ENCODE measurements at regions of chr12 and their contacts with region 1.

Region 1: DNA sequence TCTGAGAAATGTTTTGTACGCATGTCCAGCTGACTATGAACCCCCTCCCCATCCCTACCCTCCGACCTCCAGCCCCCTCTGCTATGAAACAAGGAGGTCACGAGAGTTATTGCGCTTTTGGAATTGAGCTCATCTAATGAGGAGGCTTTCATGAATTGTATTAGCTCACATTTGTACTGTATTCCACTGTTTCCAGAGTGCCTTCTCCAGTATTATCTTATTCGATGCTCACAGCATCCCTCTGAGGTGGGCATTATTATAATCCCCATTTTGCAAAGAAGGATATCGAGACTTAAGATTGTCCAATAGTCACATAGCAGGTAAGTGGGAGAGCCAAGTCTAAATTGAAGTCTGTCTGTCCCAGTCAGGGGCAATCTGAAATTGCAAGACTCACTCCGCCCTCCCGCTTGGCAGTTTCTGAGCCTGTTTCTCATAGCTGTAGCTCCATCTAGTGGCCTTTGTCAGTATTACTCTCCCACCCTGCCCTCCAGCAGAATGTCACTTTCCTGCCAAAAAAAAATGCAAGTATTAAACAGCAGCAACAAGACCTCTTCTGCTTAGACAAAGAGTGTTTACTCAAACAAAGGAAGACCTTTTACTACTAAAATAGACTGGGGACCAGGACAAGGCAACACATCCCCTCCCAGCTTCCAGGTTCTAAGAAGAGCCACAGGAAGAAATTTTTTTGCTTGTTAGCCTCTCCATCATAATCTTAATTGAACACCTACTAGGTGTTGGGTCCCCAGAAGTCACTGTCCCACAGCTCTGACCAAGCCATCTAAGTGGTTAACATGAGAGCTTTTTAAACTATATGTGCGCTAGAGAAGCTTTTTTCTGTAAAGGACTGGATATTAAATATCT is 48.6 kb upstream of the TMEM233 start:
- DNase-seq: peak; percentile 61
- ATAC-seq: peak; percentile 95
- H3K4me3 ChIP-seq: no peak overlapping the region
- H3K27ac ChIP-seq: no peak overlapping the region
- H3K4me1 ChIP-seq: no peaks in the 10 kb centered on the region
- H3K27me3 ChIP-seq: peaks cover 44% of the 10 kb centered on the region
- CTCF ChIP-seq: peak; percentile 76 to 83 (median 79)
- POLR2A ChIP-seq: no peak
- RAD21 ChIP-seq: peak; percentile 82

Region 2: DNA sequence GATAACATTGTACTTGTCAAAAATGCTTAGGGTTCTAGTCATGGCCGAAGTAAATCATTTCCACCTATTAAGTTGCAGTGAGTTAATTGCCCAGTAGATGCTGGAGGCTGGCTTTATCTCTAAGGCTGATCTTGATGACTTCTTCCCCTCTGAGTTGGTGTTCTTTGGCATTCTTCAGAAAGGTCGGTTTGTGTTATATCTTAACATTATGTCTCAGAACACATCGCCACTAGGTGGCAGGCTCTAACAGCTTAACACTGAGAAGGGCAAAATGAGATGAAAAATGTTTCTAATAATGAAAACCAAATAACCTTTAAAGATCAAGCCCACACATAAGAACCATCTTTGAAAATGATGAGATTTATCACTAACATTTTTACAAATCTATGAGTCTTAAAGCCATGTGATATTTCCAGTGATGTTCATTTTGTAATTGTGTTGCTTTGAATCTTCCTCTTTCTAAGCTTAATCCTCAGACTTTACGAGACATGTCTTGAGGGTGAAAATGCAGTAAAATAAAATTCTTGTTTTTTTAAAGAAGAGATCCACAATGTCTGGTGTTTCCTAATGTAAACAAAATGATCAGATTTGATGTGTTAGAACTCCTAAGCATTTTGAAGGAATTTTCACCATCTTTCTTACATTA is 1140.0 kb before region 1 on chr12:
- CTCF ChIA-PET with region 1: no interaction called
- POLR2A ChIA-PET with region 1: no interaction called
- RAD21 ChIA-PET with region 1: no interaction called
- intact Hi-C with region 1: loop called (anchors 5 kb)
- DNase-seq: peak; percentile 37
- ATAC-seq: peak; percentile 84
- H3K4me3 ChIP-seq: no peak overlapping the region
- H3K27ac ChIP-seq: no peak overlapping the region
- H3K4me1 ChIP-seq: no peaks in the 10 kb centered on the region
- H3K27me3 ChIP-seq: no peaks in the 10 kb centered on the region
- CTCF ChIP-seq: peak; percentile 57 to 90 (median 62)
- POLR2A ChIP-seq: no peak
- RAD21 ChIP-seq: peak; percentile 80

Region 3: GRCh38 chr12:118714051-118714460 is 830.9 kb before region 1 on chr12:
- CTCF ChIA-PET with region 1: no interaction called
- POLR2A ChIA-PET with region 1: no interaction called
- RAD21 ChIA-PET with region 1: no interaction called
- intact Hi-C with region 1: loop called (anchors 1 kb)
- DNase-seq: peak; percentile 34
- ATAC-seq: peak; percentile 80
- H3K4me3 ChIP-seq: no peak overlapping the region
- H3K27ac ChIP-seq: no peak overlapping the region
- H3K4me1 ChIP-seq: no peaks in the 10 kb centered on the region
- H3K27me3 ChIP-seq: no peaks in the 10 kb centered on the region
- CTCF ChIP-seq: peak; percentile 62 to 81 (median 68)
- POLR2A ChIP-seq: no peak
- RAD21 ChIP-seq: peak; percentile 60

Region 4: DNA sequence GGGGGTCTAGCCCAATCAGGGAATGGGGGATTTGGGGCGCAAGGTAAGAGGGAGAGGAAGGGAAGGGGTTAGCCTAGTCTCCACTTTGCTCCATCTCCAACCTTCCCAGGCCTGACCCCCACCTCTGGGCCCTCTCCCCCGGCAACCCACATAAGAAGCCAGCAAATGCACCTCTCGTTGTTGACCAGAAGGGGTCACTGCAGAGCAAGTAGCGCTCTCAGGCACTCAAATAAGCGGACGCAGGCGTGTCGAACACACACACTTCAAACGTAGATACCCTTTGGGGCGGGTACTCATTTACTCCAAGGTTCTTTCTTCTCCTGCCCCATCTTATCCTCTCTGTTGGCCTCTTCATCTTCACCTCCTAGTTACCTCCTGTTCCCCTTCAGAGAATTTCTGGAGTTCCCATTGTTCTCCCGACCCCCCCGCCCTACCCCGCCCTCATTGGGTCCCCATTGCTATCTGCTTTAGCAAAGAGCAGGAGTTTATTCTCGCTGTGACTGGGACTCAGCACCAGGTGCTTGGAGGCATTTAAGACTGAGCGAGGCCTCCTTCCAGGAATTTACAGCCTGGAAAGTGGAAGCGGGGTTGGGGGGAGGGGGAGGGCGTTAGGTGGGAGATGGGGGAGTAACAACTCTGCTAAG is 565.1 kb before region 1 on chr12:
- CTCF ChIA-PET with region 1: no interaction called
- POLR2A ChIA-PET with region 1: no interaction called
- RAD21 ChIA-PET with region 1: no interaction called
- intact Hi-C with region 1: loop called (anchors 10 kb)
- DNase-seq: peak; percentile 42
- ATAC-seq: peak; percentile 89
- H3K4me3 ChIP-seq: no peak overlapping the region
- H3K27ac ChIP-seq: no peak overlapping the region
- H3K4me1 ChIP-seq: no peaks in the 10 kb centered on the region
- H3K27me3 ChIP-seq: peaks cover 23% of the 10 kb centered on the region; the same call in 1 of the 2 replicates
- CTCF ChIP-seq: peak; percentile 56 to 92 (median 82)
- POLR2A ChIP-seq: no peak
- RAD21 ChIP-seq: peak; percentile 58

Region 5: GRCh38 chr12:119115296-119115905 is 429.6 kb before region 1 on chr12:
- CTCF ChIA-PET with region 1: no interaction called
- POLR2A ChIA-PET with region 1: no interaction called
- RAD21 ChIA-PET with region 1: no interaction called
- intact Hi-C with region 1: loop called (anchors 10 kb)
- DNase-seq: peak; percentile 41
- ATAC-seq: peak; percentile 79
- H3K4me3 ChIP-seq: no peak overlapping the region
- H3K27ac ChIP-seq: no peak overlapping the region
- H3K4me1 ChIP-seq: no peaks in the 10 kb centered on the region
- H3K27me3 ChIP-seq: peaks cover 13% of the 10 kb centered on the region
- CTCF ChIP-seq: peak; percentile 77 to 84 (median 83); a peak in 5 of 6 replicates
- POLR2A ChIP-seq: no peak
- RAD21 ChIP-seq: peak; percentile 84

Region 6: DNA sequence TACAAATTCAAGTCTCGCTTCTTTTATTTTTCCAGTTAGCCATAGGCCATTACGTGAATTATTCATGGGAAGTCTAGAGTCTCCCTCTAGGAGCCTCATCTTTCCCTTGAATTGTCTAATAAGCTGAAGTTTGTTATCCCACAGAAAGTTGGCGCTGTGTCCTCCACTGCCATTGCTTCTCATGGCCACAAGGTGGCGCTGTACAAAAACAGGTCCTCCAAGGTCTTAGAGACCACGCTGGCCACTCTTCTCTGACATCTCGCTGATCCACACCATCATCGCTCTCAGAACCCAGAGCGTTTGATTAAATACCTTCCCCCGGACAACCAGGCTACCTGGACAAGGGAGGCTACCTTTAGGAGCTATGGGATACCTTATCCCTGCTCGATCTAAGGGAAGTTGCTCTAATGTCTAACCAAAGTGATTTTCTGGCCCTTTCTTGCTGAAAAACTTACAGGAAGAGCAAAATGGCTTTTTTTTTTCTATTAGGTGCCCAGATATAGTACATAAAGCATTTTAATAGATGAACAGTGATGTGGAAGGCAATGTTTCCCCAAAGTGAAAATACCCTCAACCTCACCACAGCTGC is 100.4 kb before region 1 on chr12:
- CTCF ChIA-PET with region 1: interaction called, 30 read pairs
- POLR2A ChIA-PET with region 1: no interaction called
- RAD21 ChIA-PET with region 1: no interaction called
- intact Hi-C with region 1: loop called (anchors 1 kb)
- DNase-seq: peak; percentile 85
- ATAC-seq: peak; percentile 99
- H3K4me3 ChIP-seq: peak overlapping the region; percentile 19 to 35; a peak in 3 of 4 replicates
- H3K27ac ChIP-seq: no peak overlapping the region
- H3K4me1 ChIP-seq: peaks cover 0 to 4% of the 10 kb centered on the region in 2 experiments; a peak in 2 of 4 replicates
- H3K27me3 ChIP-seq: peaks cover 18% of the 10 kb centered on the region
- CTCF ChIP-seq: peak; percentile 99 to 100 (median 100)
- POLR2A ChIP-seq: no peak
- RAD21 ChIP-seq: peak; percentile 68